ENCODE measurements at regions of chr11 and their contacts with region 1.

Region 1: DNA sequence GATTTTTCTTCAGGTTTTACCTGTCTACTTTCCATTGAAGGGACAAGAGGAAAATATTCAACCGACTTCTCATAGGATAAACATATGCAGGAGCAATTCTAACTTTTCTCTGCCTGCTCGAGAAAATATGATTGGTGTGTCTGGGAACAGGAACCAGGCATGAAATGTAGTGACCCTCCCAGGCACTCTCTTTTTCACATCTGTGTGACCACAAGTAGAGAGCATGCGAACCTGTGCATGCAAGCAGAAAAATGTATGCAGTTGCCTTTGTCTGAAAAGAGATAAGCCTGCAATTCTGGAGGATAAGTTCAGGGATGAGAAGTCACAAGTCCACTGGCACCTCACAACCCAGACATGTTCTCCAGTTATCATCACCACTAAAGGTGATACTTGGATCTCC is 583.5 kb upstream of the FAT3 start:
- DNase-seq: no peak
- ATAC-seq: no peak
- H3K4me3 ChIP-seq: no peak overlapping the region
- H3K27ac ChIP-seq: no peak overlapping the region
- H3K4me1 ChIP-seq: no peaks in the 10 kb centered on the region
- H3K27me3 ChIP-seq: no peaks in the 10 kb centered on the region
- CTCF ChIP-seq: no peak
- POLR2A ChIP-seq: no peak

Region 2: GRCh38 chr11:91489989-91490388 is 151.2 kb before region 1 on chr11:
- intact Hi-C with region 1: no loop called
- DNase-seq: peak in 1 of 5 donors; percentile 11
- ATAC-seq: no peak
- H3K4me3 ChIP-seq: no peak overlapping the region
- H3K27ac ChIP-seq: no peak overlapping the region
- H3K4me1 ChIP-seq: no peaks in the 10 kb centered on the region
- H3K27me3 ChIP-seq: no peaks in the 10 kb centered on the region
- CTCF ChIP-seq: no peak
- POLR2A ChIP-seq: no peak

Region 3: DNA sequence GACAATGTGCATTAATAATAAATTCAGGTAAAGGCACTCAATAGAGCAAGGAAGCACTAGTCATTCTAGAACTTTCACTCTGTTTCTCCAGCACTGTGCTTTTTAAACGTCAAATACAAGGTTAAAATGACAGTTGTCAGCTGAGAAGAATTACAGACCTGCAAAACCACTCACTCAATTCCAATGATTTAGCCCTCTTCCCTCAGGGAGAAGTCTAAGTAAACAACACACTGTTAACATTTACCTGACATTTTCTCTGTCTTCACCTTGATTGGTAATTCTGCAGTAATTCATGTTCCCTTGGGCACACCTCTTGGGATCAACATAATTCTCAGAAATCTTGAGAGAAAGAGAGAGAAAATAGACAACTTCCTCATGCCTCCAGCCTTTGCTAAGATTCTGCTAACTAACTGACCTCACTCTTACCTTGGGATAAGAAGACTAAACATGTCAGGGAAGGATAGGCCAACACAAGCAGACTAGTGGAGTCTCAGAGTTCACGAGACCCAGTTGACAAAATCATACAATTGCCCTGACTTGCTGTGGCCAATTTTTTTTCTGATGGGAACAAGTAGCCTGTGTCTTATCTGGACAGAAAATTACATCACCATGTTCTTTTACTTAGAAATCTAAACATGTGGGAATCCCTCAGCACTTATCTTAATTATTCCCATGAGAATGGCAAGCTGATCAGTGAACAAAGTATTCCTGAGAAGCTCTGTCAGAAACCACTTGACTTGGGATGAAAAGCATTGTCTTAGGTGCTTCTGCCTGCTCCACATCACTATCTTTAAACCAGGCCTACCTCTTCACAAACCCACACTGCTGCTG is 66.7 kb after region 1 on chr11:
- intact Hi-C with region 1: loop called in 1 of 10 experiments (anchors 10 kb)
- DNase-seq: no peak
- ATAC-seq: no peak
- H3K4me3 ChIP-seq: no peak overlapping the region
- H3K27ac ChIP-seq: no peak overlapping the region
- H3K4me1 ChIP-seq: no peaks in the 10 kb centered on the region
- H3K27me3 ChIP-seq: no peaks in the 10 kb centered on the region
- CTCF ChIP-seq: no peak
- POLR2A ChIP-seq: no peak

Region 4: DNA sequence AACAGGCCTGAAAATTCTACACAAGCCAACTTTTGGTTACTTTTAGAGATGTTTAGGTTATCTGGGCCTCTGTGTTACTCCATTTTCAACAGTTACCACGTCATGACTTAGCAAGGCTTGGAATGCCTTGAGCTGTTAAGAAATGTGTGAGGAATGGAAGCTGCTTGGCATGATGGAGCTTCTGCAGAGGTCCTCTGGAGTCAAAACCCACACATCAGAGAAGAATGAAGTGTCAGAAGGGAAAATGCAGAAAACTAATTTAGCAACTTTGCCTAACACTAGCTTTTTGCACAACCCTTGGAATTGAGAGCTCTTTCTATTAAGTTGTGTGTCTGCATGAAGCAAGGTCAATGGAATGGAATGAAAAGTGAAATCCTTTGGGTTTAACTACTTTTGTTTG is 610.8 kb after region 1 on chr11:
- intact Hi-C with region 1: no loop called
- DNase-seq: no peak
- ATAC-seq: no peak
- H3K4me3 ChIP-seq: no peak overlapping the region
- H3K27ac ChIP-seq: no peak overlapping the region
- H3K4me1 ChIP-seq: no peaks in the 10 kb centered on the region
- H3K27me3 ChIP-seq: no peaks in the 10 kb centered on the region
- CTCF ChIP-seq: no peak
- POLR2A ChIP-seq: no peak